A549 (cell line): ENCODE measurements at regions of chr15 and their contacts with region 1.

Region 1: GRCh38 chr15:100671858-100672543 is 69.6 kb downstream of the ASB7 start:
- DNase-seq: peak; percentile 69 to 84
- ATAC-seq: peak; percentile 97 to 99
- H3K4me3 ChIP-seq: peak overlapping the region; percentile 33
- H3K27ac ChIP-seq: peak overlapping the region; percentile 68 to 73
- H3K4me1 ChIP-seq: peaks cover 5% of the 10 kb centered on the region
- CTCF ChIP-seq: peak; percentile 95
- EP300 ChIP-seq: no peak
- POLR2A ChIP-seq: no peak
- RAD21 ChIP-seq: peak; percentile 99

Region 2: GRCh38 chr15:100520132-100520921 is 151.7 kb before region 1 on chr15:
- CTCF ChIA-PET with region 1: no interaction called
- POLR2A ChIA-PET with region 1: no interaction called
- DNase-seq: no peak
- ATAC-seq: no peak
- H3K4me3 ChIP-seq: no peak overlapping the region
- H3K27ac ChIP-seq: no peak overlapping the region
- H3K4me1 ChIP-seq: no peaks in the 10 kb centered on the region
- CTCF ChIP-seq: no peak
- EP300 ChIP-seq: no peak
- POLR2A ChIP-seq: no peak
- RAD21 ChIP-seq: no peak

Region 3: GRCh38 chr15:100650685-100651084 is 21.3 kb before region 1 on chr15:
- CTCF ChIA-PET with region 1: interaction called, 20 read pairs
- POLR2A ChIA-PET with region 1: no interaction called
- DNase-seq: peak; percentile 21 to 34
- ATAC-seq: peak in 1 of 2 experiments; percentile 60; a peak in 2 of 6 replicates
- H3K4me3 ChIP-seq: no peak overlapping the region
- H3K27ac ChIP-seq: no peak overlapping the region
- H3K4me1 ChIP-seq: no peaks in the 10 kb centered on the region
- CTCF ChIP-seq: peak; percentile 39
- EP300 ChIP-seq: no peak
- POLR2A ChIP-seq: no peak
- RAD21 ChIP-seq: peak; percentile 25 to 31; a peak in 3 of 5 replicates

Region 4: GRCh38 chr15:100713163-100713867 is 41.3 kb after region 1 on chr15:
- CTCF ChIA-PET with region 1: interaction called, 20 read pairs
- POLR2A ChIA-PET with region 1: no interaction called
- DNase-seq: peak; percentile 90 to 97
- ATAC-seq: peak; percentile 86 to 91
- H3K4me3 ChIP-seq: no peak overlapping the region
- H3K27ac ChIP-seq: peak overlapping the region; percentile 66 to 92
- H3K4me1 ChIP-seq: peaks cover 41% of the 10 kb centered on the region
- CTCF ChIP-seq: no peak
- EP300 ChIP-seq: peak; percentile 54 to 78; a peak in 3 of 5 replicates
- POLR2A ChIP-seq: no peak
- RAD21 ChIP-seq: peak in 1 of 2 experiments; percentile 7; a peak in 2 of 5 replicates

Region 5: DNA sequence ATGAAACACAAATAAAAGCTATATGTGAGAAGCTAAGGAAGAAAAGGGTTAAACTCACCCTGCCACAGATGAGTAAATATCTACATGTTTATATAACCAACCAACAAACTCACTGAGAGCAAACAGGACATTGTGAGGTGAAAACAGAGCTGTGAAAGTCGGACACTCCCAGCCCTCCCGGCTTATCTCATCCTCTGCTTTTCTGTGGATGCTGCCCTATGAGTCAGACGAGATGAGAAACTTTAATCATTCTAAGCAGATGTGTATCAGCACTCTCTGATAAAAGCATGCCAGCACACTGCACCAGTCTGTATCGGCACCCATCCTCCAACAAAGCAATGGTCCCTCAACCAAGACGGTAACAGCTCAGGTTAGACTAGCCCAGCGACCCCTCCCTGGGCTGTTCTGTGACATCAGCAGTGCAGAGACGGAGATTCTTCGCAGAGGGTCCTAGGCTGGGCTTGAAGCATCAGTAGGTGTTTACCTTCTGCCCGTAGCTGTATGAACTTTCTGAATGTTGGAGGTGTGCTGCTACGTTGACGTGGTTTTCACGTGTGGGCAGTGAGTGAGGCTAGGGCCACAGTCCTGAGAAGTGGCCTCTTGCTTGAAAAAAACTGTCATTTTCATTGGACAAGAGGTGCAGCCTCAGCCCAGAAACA is 87.8 kb after region 1 on chr15:
- CTCF ChIA-PET with region 1: interaction called, 15 read pairs
- POLR2A ChIA-PET with region 1: no interaction called
- DNase-seq: peak; percentile 92 to 93
- ATAC-seq: peak; percentile 94 to 96
- H3K4me3 ChIP-seq: peak overlapping the region; percentile 26; the same call in 2 of the 3 replicates
- H3K27ac ChIP-seq: peak overlapping the region; percentile 51 to 67
- H3K4me1 ChIP-seq: peaks cover 22% of the 10 kb centered on the region
- CTCF ChIP-seq: no peak
- EP300 ChIP-seq: peak in 1 of 2 experiments; percentile 22; a peak in 1 of 5 replicates
- POLR2A ChIP-seq: no peak
- RAD21 ChIP-seq: peak in 1 of 2 experiments; percentile 31; a peak in 4 of 5 replicates

Region 6: GRCh38 chr15:100849252-100850171 is 177.5 kb after region 1 on chr15:
- CTCF ChIA-PET with region 1: interaction called, 13 read pairs
- POLR2A ChIA-PET with region 1: no interaction called
- DNase-seq: peak; percentile 82 to 96
- ATAC-seq: peak; percentile 98 to 99
- H3K4me3 ChIP-seq: peak overlapping the region; percentile 70
- H3K27ac ChIP-seq: peak overlapping the region; percentile 82 to 90
- H3K4me1 ChIP-seq: 0 out of 3 replicates have a peak, but pooled peaks cover 3% of the 10 kb centered on the region
- CTCF ChIP-seq: peak; percentile 63
- EP300 ChIP-seq: no peak
- POLR2A ChIP-seq: peak; percentile 77
- RAD21 ChIP-seq: peak; percentile 51 to 65

Region 7: DNA sequence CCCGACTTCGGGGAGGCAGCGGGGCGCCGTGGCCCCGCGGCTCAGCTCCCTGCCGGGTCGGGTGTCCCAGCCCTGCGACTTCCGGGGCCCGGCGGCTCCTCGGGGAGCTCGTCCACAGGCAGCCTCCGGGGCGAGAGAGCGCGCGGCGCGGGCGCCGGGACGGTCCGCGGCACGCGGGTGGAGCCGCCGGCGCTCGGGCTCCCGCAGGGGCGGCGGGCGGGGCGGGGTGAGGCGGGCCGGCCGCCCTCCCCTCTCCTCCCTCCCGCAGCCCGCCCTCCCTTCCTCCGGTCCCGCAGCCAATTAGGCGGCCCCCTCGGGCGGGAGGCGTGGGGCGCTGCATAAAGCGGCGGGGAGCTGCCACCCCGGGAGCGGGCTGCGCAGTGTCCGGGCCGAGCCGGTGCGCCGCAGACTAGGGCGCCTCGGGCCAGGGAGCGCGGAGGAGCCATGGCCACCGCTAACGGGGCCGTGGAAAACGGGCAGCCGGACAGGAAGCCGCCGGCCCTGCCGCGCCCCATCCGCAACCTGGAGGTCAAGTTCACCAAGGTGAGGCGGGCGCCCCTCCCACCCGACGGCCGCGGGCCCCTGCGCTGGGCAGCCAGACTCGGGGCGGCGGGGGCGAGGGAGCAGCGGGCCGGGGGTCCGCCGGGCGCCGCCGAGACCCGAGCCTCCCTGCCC is 207.6 kb after region 1 on chr15 and contains the start of gene ALDH1A3:
- CTCF ChIA-PET with region 1: interaction called, 74 read pairs
- POLR2A ChIA-PET with region 1: interaction called, 3 read pairs
- DNase-seq: peak; percentile 65 to 89
- ATAC-seq: peak; percentile 81 to 91
- H3K4me3 ChIP-seq: peak within 1 kb of the TSS; percentile 75
- H3K27ac ChIP-seq: peak within 1 kb of the TSS; percentile 84 to 91
- H3K4me1 ChIP-seq: peaks cover 5% of the 10 kb centered on the region
- CTCF ChIP-seq: no peak
- EP300 ChIP-seq: no peak
- POLR2A ChIP-seq: peak; percentile 84
- RAD21 ChIP-seq: no peak; a peak in 1 of 5 replicates
- polyA plus RNA-seq, gene ALDH1A3: 9.3 and 11.9 TPM in 2 replicates

Region 8: GRCh38 chr15:100940767-100941379 is 268.9 kb after region 1 on chr15:
- CTCF ChIA-PET with region 1: no interaction called
- POLR2A ChIA-PET with region 1: no interaction called
- DNase-seq: no peak
- ATAC-seq: no peak
- H3K4me3 ChIP-seq: no peak overlapping the region
- H3K27ac ChIP-seq: peak overlapping the region in 1 of 2 experiments; percentile 24; a peak in 1 of 6 replicates
- H3K4me1 ChIP-seq: peaks cover 7% of the 10 kb centered on the region; the same call in 2 of the 3 replicates
- CTCF ChIP-seq: no peak
- EP300 ChIP-seq: no peak
- POLR2A ChIP-seq: no peak
- RAD21 ChIP-seq: no peak

Region 9: DNA sequence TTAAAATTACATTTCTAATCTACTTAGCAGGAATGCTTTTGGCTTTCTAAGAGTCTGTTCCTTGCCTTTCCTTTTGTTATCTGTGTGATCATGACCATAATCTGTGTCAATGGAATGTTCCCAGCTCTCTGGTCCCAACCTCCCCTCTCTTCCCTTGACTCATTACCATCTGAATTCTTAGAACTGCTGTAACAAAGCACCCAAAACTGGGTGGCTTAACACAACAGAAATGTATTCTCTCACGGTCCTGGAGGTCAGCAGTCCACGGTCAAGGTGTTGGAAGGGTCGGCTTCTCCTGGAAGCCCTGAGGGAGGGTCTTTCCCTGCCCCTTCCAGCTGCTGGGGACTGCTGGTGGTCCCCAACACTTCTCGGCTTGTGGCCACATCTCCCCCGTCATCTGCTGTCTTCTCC is 328.3 kb after region 1 on chr15:
- CTCF ChIA-PET with region 1: interaction called, 24 read pairs
- POLR2A ChIA-PET with region 1: no interaction called
- DNase-seq: no peak
- ATAC-seq: no peak
- H3K4me3 ChIP-seq: no peak overlapping the region
- H3K27ac ChIP-seq: no peak overlapping the region
- H3K4me1 ChIP-seq: 0 out of 3 replicates have a peak, but pooled peaks cover 6% of the 10 kb centered on the region
- CTCF ChIP-seq: no peak
- EP300 ChIP-seq: no peak
- POLR2A ChIP-seq: no peak
- RAD21 ChIP-seq: no peak